Activated CD4-positive, alpha-beta T cell treated with anti-CD3 and anti-CD28 coated beads, Interleukin-2, amount 10 ng/mL, durations not matched to agents 7 days and 5 days (primary cell): ENCODE measurements at regions of chr3 and their contacts with region 1.

Region 1: GRCh38 chr3:58491506-58492402 is at the start of gene KCTD6:
- DNase-seq: peak; percentile 81
- H3K4me3 Mint-ChIP-seq: peak within 1 kb of the TSS; percentile 84
- H3K27ac Mint-ChIP-seq: peak within 1 kb of the TSS; percentile 86
- H3K4me1 Mint-ChIP-seq: peaks cover 41% of the 10 kb centered on the region
- H3K27me3 Mint-ChIP-seq: peaks cover 39% of the 10 kb centered on the region
- total RNA-seq, gene KCTD6: 7.7 to 10.8 TPM

Region 2: GRCh38 chr3:58366699-58367098 is 125.1 kb before region 1 on chr3:
- CTCF ChIA-PET with region 1: no interaction called
- POLR2A ChIA-PET with region 1: no interaction called
- DNase-seq: no peak
- H3K4me3 Mint-ChIP-seq: no peak overlapping the region
- H3K27ac Mint-ChIP-seq: no peak overlapping the region
- H3K4me1 Mint-ChIP-seq: peaks cover 25% of the 10 kb centered on the region
- H3K27me3 Mint-ChIP-seq: no peaks in the 10 kb centered on the region

Region 3: DNA sequence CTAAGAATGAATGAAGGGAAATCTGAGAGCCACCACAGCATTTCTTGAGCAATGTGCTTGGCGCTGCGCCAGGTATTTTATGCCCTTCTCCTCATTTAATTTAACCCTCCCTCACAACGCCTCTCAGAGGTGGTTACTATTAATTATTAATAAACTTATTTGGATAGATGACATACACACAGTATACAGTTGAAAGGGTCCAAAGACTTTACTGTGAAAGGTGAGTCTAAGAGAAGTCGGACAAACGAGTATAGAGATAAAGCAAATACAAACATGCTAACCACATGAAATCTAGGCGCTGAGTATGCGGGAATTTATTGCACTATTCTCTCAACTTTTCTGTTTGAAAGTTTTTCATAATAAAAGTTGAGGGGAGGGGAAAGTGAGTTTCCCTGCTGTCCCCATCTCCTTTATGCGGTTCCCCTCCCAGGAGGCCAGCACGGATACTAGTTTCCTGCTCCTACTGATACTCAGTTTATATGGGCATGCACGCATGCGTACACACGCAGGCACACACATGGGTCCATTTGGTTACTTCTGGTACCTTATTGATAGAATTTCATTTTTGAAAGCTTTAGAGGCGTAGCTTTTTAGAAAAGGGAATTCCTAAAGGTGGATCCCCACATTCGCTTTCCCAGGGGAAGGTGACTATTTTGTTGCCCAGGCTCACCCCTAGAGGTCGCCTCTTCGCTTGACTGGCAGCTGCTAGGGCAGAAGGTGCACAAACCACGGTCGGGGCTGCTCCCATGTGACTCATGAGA is 28.4 kb before region 1 on chr3:
- CTCF ChIA-PET with region 1: interaction called, 13 read pairs
- POLR2A ChIA-PET with region 1: no interaction called
- DNase-seq: peak; percentile 73
- H3K4me3 Mint-ChIP-seq: peak overlapping the region; percentile 29
- H3K27ac Mint-ChIP-seq: no peak overlapping the region
- H3K4me1 Mint-ChIP-seq: peaks cover 21% of the 10 kb centered on the region
- H3K27me3 Mint-ChIP-seq: peaks cover 1% of the 10 kb centered on the region

Region 4: DNA sequence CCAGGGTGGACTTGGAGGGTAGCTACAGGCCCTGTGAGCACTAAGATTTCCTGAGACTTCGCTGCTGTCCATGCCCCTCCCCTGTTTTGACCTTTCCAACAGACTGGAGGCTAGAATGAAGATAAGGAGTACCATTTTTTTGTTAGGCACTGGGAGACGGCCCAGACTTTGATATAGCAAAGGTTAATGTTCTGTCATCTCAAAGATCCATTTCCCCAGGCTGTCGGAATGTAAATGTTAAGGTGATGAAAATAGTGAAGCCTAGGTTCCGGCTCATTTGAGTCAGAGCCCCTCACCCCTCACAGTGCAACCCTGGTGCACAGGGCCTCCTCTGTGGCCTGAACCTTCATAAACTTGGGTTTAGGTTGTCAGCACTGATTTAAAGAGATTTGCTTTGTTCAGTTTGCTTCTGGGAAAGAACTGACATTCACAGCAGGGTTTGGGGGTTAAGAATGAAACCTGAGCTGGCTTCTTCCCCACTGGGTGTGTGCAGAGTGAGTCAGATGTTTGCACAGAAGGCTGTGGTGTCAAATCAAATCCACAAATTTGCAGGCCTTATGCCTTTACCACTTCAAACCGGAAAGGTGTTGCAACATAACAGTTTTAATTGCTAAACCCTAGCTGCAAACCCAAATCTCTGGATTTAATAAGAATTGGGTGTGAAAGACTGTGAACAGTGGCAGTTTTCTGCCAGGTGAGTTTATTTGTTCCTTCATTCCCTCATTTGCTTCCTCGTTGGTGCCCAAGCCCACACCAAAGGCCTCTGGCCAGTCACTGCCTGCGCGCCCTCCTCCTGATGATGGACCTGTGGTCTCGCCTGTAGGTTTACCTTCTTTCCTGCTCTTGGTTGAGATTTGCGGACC is 20.5 kb before region 1 on chr3:
- CTCF ChIA-PET with region 1: interaction called, 22 read pairs
- POLR2A ChIA-PET with region 1: no interaction called
- DNase-seq: peak; percentile 69
- H3K4me3 Mint-ChIP-seq: peak overlapping the region; percentile 23
- H3K27ac Mint-ChIP-seq: peak overlapping the region; percentile 92
- H3K4me1 Mint-ChIP-seq: peaks cover 55% of the 10 kb centered on the region
- H3K27me3 Mint-ChIP-seq: peaks cover 1% of the 10 kb centered on the region